Activated T-helper 2 cell treated with anti-CD3 and anti-CD28 coated beads, Interferon-gamma antibody, Interleukin-2, Interleukin-4, amounts not matched to agents 10 μg/mL and 5 μg/mL and 100 μg/mL, durations not matched to agents 14 hours and 24 hours and 36 hours (primary cell): ENCODE measurements at regions of chr2 and their contacts with region 1.

Region 1: DNA sequence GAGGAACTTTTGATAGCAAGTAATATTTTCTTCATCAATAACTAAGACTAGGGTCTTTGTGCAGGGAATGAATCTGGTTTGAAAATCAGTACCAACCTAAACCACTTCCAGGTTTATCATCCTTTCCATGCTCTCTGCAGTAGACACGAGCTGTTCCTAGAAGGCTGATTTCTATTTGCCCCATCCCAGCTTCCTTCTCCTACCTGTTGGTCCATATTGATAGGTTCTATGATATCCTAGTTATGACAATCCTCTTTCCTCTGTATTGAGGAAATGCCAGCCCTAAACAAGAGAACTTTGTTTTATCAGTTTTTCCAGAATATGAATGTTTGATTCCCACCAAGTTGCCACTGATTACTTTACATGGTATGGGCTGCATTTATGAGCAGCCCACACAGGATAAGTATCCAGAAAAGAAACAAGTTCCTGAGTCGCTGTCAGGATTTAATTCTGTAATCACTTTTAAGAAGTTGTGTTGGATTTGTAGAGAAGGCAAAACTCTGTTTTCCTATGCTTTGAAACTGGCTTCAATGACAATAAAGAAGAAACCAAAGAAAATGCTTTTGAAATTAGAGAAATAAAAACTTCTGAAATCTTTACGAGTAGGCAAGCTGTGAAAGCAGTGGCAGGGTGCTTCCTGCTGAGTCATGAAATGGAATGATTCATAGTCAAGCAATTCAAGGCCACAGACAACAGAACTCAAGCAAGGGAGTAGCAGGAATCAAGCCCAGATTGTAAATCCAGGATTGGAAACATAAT is 37.3 kb upstream of the TANK start:
- DNase-seq: no peak
- H3K4me3 Mint-ChIP-seq: no peak overlapping the region
- H3K27ac Mint-ChIP-seq: peak overlapping the region; percentile 3
- H3K4me1 Mint-ChIP-seq: peaks cover 15% of the 10 kb centered on the region
- H3K27me3 Mint-ChIP-seq: no peaks in the 10 kb centered on the region

Region 2: DNA sequence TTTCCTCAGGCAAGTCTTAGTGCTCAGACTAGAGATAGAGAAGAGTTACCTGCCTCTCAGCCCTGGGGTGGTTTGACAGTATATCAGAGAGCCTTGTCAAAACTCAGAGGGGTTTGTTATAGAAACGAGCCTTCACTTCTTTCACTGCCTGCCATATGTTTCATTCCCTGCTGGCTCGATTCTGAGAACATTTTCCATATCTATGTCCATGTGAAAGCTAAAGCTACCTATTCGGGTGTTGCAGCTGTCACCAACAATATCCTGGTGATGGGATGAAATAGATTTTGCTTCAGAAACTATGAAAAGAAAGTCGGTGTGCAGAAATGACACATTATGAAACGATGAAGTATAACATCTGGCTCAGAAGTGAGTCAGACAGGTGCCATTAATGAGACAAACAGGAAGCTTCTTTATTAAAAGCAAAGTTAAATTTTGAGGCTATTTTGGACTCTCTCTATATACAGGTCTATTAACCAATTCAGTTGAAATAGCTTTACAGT is 18.8 kb before region 1 on chr2:
- intact Hi-C with region 1: loop called (anchors 2 kb)
- DNase-seq: no peak
- H3K4me3 Mint-ChIP-seq: no peak overlapping the region
- H3K27ac Mint-ChIP-seq: no peak overlapping the region
- H3K4me1 Mint-ChIP-seq: peaks cover 31% of the 10 kb centered on the region
- H3K27me3 Mint-ChIP-seq: peaks cover 2% of the 10 kb centered on the region

Region 3: GRCh38 chr2:161166538-161167409 is 43.8 kb after region 1 on chr2:
- intact Hi-C with region 1: loop called (anchors 5 kb)
- DNase-seq: peak; percentile 58
- H3K4me3 Mint-ChIP-seq: peak overlapping the region; percentile 34
- H3K27ac Mint-ChIP-seq: peak overlapping the region; percentile 87
- H3K4me1 Mint-ChIP-seq: peaks cover 84% of the 10 kb centered on the region
- H3K27me3 Mint-ChIP-seq: no peaks in the 10 kb centered on the region